Heart left ventricle (tissue), 16 donors: ENCODE measurements at regions of chr5 and their contacts with region 1.

Region 1: GRCh38 chr5:96868603-96869371 is 7.5 kb upstream of the ERAP2 start:
- DNase-seq: no peak
- ATAC-seq: peak; percentile 58 to 90 (median 82)
- H3K4me3 ChIP-seq: no peak overlapping the region
- H3K27ac ChIP-seq: no peak overlapping the region
- H3K4me1 ChIP-seq: no peaks in the 10 kb centered on the region
- H3K27me3 ChIP-seq: no peaks in the 10 kb centered on the region
- CTCF ChIP-seq: peak; percentile 82 to 94 (median 90)
- POLR2A ChIP-seq: no peak

Region 2: GRCh38 chr5:96807075-96807654 is 61.6 kb before region 1 on chr5:
- intact Hi-C with region 1: loop called in 1 of 10 experiments (anchors 5 kb)
- DNase-seq: peak; percentile 85 to 91 (median 87)
- ATAC-seq: peak; percentile 28 to 81 (median 69)
- H3K4me3 ChIP-seq: peak overlapping the region; percentile 65 to 96 (median 88)
- H3K27ac ChIP-seq: peak overlapping the region; percentile 97 to 100 (median 99)
- H3K4me1 ChIP-seq: peaks cover 0 to 54% (median 12%) of the 10 kb centered on the region in 12 donors
- H3K27me3 ChIP-seq: no peaks in the 10 kb centered on the region
- CTCF ChIP-seq: peak in 2 of 12 donors; percentile 4 to 5
- POLR2A ChIP-seq: peak in 1 of 2 donors; percentile 69

Region 3: DNA sequence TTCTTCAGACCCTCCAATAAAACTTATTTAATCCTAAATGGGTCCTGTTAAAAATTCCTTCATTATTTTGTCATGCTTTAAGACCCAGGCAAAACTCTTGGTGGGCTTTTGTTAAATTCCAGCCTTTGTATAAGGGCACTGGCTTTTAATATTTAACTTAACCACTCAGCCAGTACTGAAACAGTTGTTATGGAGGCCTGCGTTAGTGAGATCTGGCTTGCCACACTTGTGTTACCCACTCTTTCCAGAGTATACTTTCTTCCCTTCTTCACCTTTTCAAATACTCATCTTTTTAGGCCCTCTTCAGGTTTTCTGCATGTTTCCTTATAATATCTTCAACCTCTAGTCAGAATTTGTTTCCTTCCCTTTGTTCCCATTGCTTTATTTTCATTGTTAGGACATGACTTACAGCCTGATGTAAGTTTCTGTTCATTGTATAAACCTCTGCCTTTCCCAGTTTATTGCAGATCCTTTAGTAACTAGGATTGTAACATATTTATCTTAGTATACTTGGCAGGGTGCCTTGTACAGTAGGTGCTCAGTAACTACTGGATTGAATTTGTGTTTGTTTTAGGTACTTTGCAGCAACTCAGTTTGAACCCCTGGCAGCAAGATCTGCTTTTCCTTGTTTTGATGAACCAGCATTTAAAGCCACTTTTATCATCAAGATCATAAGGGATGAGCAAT is 115.9 kb after region 1 on chr5:
- intact Hi-C with region 1: loop called in 2 of 10 experiments (anchors 5 to 10 kb)
- DNase-seq: no peak
- ATAC-seq: no peak
- H3K4me3 ChIP-seq: no peak overlapping the region
- H3K27ac ChIP-seq: no peak overlapping the region
- H3K4me1 ChIP-seq: peaks cover 0 to 13% (median 0%) of the 10 kb centered on the region in 12 donors
- H3K27me3 ChIP-seq: no peaks in the 10 kb centered on the region
- CTCF ChIP-seq: no peak
- POLR2A ChIP-seq: no peak

Region 4: DNA sequence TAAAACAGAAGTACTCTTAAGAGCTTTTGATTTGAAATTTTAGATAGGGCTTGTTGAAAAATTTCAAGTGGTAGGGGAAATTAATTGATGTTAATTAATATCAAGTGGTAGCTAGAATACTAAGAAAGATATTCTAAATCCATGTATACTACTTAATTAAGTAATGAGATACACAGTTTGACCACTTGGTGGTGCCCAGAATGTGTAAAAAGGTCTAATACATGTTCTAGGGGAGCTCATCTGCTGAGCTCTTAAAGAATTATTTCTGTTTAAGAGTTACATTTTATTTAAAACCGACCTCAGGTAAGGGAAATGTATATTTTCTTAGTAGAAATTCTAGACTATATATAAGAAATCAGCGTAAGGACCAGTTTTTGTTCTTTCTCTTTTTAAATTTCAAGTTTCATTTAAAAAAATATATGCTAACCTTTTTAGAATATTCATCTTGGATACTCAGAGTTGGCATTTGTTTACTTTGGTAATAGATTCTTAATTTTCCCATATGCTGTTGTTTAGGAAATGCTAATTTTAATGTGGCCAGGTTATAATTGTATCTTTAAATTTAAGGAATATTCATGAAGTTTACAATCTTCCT is 128.6 kb after region 1 on chr5:
- intact Hi-C with region 1: loop called in 1 of 10 experiments (anchors 10 kb)
- DNase-seq: no peak
- ATAC-seq: peak in 1 of 4 donors; percentile 61
- H3K4me3 ChIP-seq: no peak overlapping the region
- H3K27ac ChIP-seq: no peak overlapping the region
- H3K4me1 ChIP-seq: no peaks in the 10 kb centered on the region
- H3K27me3 ChIP-seq: no peaks in the 10 kb centered on the region
- CTCF ChIP-seq: peak in 11 of 12 donors; percentile 27 to 66 (median 49)
- POLR2A ChIP-seq: no peak